GM18951 (cell line): ENCODE measurements at regions of chr1 and their contacts with region 1.

Region 1: DNA sequence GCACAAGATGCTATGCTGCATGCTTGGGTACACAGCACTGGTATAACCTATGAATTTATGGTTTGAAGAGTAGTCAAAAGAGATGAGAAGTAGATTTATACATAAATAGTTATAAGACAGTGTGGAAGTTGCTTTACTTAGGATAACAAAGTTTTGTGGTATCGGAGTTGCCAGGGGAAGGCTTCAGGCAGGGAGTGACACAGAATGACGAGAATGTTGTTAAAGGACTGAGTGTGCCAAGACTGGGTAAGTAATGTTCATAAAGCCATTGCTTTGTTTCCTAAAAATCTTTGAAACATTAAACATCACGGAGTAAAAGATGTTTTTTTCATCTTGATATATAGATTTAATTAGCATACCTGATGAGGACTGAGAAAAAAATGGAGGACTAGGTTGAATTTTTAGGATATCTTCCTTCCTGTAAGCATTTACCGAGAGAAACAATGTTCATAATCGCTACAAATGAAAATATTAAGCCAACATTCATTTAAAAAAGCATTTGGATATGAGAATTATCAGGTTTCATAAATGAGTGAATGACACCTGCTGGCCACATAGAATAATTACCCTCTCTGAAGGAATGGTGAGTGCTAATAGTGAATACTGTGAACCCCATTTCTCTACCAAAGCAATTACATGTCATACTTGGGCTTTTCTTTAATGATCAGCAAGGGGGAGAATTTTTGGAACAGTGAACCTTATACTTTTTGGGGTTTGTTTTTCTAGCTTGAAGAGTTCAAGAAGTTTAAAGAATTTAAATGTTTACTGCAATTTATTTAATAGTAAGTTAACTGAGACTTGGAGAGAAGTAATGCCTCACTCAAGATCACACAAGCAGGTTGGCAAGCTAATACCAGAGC is 28.4 kb downstream of the EXTL2 start:
- POLR2A ChIP-seq: no peak

Region 2: GRCh38 chr1:99808391-99809115 is 1057.7 kb before region 1 on chr1:
- in situ Hi-C with region 1: loop called (anchors 10 kb)
- POLR2A ChIP-seq: no peak

Region 3: DNA sequence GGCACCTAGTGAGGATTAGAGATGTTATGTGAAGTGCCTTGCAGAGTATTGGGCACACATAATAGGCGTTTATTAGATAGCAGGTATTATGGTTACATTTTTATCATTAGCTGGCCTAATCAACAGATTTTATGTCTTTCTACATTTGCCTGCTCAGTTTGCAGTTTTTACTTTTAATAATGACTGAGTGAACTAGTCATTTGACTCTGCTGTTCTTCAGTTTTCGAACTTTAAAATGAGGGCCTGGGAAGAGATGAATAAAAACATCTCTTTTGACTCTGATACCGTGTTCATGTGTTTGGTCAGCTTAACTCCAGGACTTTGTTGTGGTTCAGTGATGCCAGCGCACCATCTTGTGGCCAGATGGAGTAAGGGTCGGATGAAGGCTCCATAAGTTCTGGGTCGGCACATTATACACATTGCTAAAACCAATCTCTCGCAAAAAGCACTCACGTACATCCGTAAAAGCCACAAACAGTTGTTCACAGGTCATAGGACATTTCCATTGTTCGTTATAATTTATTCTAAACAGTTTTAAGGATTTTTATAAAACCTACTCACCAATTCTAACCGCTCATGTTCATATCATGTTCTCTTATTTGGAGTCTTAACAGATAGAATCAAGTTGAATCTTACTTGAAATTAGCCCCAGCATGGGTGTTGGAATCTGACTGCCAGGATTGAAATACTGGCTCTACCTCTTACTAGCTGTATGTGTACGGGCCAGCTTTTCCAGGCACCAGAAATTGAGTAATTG is 406.7 kb before region 1 on chr1:
- in situ Hi-C with region 1: loop called (anchors 5 kb)
- POLR2A ChIP-seq: no peak

Region 4: GRCh38 chr1:100683448-100684349 is 182.6 kb before region 1 on chr1:
- in situ Hi-C with region 1: no loop called
- POLR2A ChIP-seq: no peak